ENCODE measurements at regions of chr19 and their contacts with region 1.

Region 1: DNA sequence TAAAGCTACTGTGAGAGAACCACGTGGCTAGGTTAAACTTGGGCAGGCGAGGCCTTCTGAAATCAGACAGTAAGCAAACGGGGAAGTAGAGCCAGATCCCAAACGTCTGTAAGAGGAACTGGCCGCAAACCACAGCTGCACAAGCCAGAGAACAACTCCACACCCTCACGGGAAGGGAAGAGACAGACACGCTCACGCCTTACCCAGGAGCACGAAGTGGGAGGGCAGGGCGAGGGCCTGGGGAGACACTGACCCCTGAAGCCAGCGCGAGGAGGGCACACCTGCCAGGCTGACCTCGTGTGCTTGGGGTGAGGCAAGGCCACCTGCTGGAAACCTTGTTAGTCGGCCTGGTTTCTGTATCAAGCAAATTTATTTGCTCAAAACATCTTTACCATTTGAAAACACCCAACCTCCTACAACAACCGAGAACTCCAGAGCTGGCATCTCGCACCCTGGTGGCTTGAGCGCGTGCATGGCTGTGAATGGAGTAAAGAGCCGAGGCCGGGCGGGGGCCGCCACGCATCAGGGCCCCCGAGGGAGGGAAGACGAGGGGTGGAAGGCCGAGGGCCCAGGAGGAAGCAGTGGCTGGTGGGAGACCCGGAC is 7.3 kb downstream of the POLR2E start:
- DNase-seq: peak in 2 of 5 donors; percentile 71
- H3K4me3 ChIP-seq: peak overlapping the region; percentile 14
- H3K4me3 Mint-ChIP-seq: peak overlapping the region; percentile 15 to 74 (median 48)
- H3K27ac ChIP-seq: peak overlapping the region; percentile 27
- H3K27ac Mint-ChIP-seq: peak overlapping the region; percentile 70 to 97 (median 90)
- H3K4me1 ChIP-seq: peaks cover 55% of the 10 kb centered on the region
- H3K4me1 Mint-ChIP-seq: peaks cover 31 to 67% (median 42%) of the 10 kb centered on the region in 3 donors
- H3K27me3 ChIP-seq: no peaks in the 10 kb centered on the region
- H3K27me3 Mint-ChIP-seq: peaks cover 0 to 5% of the 10 kb centered on the region in 2 donors

Region 2: DNA sequence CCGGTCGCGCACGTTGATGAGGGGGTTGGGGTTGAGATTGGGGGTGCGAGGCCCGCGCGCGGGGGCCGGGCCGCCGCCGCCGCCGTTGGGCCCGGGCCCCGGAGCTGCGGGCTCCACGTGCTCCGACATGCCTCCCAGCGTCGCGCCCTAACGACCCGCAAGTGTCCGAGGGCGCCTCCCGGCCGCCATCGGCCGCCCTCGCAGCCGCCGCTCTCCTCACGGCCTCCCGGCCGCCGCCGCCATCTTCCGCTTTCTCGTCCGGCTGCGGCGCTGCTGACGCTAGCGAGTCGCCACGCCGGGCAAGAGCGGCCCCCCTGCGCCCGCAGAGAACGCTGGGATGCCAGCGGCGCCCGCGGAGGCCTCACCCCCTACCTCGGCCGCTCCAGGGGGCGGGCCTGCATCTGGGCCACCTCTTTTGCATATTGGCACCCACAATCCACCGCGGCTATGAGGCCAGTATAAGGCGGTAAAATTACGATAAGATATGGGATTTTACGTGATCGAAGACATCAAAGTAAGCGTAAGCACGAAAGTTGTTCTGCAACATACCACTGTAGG is 67.0 kb before region 1 on chr19 and contains the start of gene TMEM259:
- CTCF ChIA-PET with region 1: interaction called, 3 read pairs
- POLR2A ChIA-PET with region 1: interaction called, 143 read pairs
- DNase-seq: peak; percentile 96 to 99 (median 98)
- H3K4me3 ChIP-seq: peak within 1 kb of the TSS; percentile 71
- H3K4me3 Mint-ChIP-seq: peak within 1 kb of the TSS; percentile 76 to 95 (median 89)
- H3K27ac ChIP-seq: peak within 1 kb of the TSS; percentile 97
- H3K27ac Mint-ChIP-seq: peak within 1 kb of the TSS; percentile 98 to 100 (median 99)
- H3K4me1 ChIP-seq: peaks cover 59% of the 10 kb centered on the region
- H3K4me1 Mint-ChIP-seq: peaks cover 24 to 60% (median 44%) of the 10 kb centered on the region in 3 donors
- H3K27me3 ChIP-seq: no peaks in the 10 kb centered on the region
- H3K27me3 Mint-ChIP-seq: peaks cover 0 to 6% of the 10 kb centered on the region in 2 donors
- total RNA-seq, gene TMEM259: 151 to 157 TPM

Region 3: DNA sequence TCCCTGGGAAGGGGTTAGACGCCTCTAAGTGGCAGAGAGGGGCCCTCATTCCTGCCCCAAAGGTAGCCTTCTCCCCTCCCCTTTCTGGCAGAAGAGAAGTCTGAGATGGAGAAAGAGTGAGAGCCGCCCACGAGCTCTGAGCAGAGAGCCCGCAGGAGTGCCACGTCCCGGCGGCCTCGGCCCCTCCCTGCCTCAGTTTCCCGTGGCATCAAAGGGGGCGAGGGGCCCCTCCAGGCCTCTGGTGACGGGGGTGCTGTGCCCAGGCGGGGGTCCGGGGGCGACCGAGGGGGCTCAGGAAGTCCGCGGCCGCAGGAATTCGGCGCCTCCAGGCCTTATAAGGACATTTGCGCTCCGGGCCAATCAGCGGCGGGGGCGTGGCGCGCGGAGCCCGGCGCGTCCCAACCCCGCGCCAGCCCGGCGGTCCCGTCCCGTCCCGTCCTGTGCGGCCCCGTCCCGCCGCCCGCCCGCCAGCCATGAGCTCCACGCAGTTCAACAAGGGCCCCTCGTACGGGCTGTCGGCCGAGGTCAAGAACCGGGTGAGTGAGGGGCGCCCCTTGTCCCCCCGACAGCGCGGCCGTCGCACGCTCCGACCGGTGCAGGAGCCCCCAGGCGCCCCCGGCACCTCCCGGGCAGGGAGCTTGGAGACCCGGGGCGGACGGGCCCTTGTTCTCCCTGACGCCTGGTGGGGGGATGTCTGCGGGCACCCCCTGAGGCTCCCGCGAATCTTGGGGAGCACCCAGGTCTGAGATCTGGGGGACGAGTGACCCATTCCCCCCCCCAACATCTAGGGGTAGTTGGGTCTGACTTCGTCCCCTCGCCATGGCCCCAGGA is 61.5 kb before region 1 on chr19 and contains the start of gene CNN2:
- CTCF ChIA-PET with region 1: interaction called, 12 read pairs
- POLR2A ChIA-PET with region 1: interaction called, 143 read pairs
- DNase-seq: peak; percentile 58 to 71 (median 68)
- H3K4me3 ChIP-seq: peak within 1 kb of the TSS; percentile 92
- H3K4me3 Mint-ChIP-seq: peak within 1 kb of the TSS; percentile 95 to 99 (median 98)
- H3K27ac ChIP-seq: peak within 1 kb of the TSS; percentile 89
- H3K27ac Mint-ChIP-seq: peak within 1 kb of the TSS; percentile 82 to 99 (median 96)
- H3K4me1 ChIP-seq: peaks cover 38% of the 10 kb centered on the region
- H3K4me1 Mint-ChIP-seq: peaks cover 26 to 45% (median 32%) of the 10 kb centered on the region in 3 donors
- H3K27me3 ChIP-seq: no peaks in the 10 kb centered on the region
- H3K27me3 Mint-ChIP-seq: peaks cover 0 to 6% of the 10 kb centered on the region in 2 donors
- total RNA-seq, gene CNN2: 78.1 to 78.9 TPM

Region 4: GRCh38 chr19:1039646-1040475 is 48.1 kb before region 1 on chr19 and contains the start of gene ABCA7:
- CTCF ChIA-PET with region 1: interaction called, 5 read pairs
- POLR2A ChIA-PET with region 1: interaction called, 13 read pairs
- DNase-seq: peak; percentile 98 to 100 (median 99)
- H3K4me3 ChIP-seq: peak within 1 kb of the TSS; percentile 78
- H3K4me3 Mint-ChIP-seq: peak within 1 kb of the TSS; percentile 94 to 100 (median 99)
- H3K27ac ChIP-seq: peak within 1 kb of the TSS; percentile 72
- H3K27ac Mint-ChIP-seq: peak within 1 kb of the TSS; percentile 86 to 97 (median 92)
- H3K4me1 ChIP-seq: peaks cover 49% of the 10 kb centered on the region
- H3K4me1 Mint-ChIP-seq: peaks cover 41 to 61% (median 46%) of the 10 kb centered on the region in 3 donors
- H3K27me3 ChIP-seq: no peaks in the 10 kb centered on the region
- H3K27me3 Mint-ChIP-seq: peaks cover 0 to 1% of the 10 kb centered on the region in 2 donors
- total RNA-seq, gene ABCA7: 33.8 to 39.5 TPM

Region 5: DNA sequence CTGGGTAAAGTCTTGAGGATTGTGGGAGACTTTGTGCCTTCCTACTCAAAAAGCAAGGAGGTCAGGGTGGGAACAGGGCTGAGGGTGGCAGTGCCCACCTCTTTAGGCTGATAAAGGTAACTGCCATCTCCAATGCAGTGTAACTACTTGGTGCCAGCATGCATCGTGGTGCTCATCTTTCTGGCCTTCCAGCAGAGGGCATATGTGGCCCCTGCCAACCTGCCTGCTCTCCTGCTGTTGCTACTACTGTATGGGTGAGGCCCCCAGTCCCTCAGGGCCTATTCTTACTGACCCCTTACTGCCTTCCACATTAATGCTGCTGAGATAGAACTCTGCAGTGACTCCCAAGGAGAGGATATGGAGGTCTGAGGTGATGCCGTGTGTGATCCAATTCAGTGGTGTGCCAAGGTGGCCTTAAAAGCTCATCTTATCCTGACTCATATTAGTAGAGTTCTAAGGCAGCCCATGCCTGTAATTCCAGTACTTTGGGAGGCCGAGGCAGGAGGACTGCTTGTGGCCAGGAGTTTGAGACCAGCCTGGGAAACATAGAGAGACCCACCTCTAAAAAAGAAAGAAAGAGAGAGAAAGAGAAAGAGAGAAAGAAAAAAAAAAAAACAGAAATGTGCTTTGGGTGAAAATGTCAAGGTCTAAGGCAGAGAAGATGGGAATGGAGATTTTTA is 30.6 kb before region 1 on chr19:
- CTCF ChIA-PET with region 1: interaction called, 57 read pairs
- POLR2A ChIA-PET with region 1: interaction called, 26 read pairs
- DNase-seq: peak in 3 of 5 donors; percentile 38 to 70 (median 56)
- H3K4me3 ChIP-seq: no peak overlapping the region
- H3K4me3 Mint-ChIP-seq: peak overlapping the region in 2 of 7 donors; percentile 29 to 42
- H3K27ac ChIP-seq: no peak overlapping the region
- H3K27ac Mint-ChIP-seq: peak overlapping the region; percentile 37 to 94 (median 82)
- H3K4me1 ChIP-seq: peaks cover 20% of the 10 kb centered on the region
- H3K4me1 Mint-ChIP-seq: peaks cover 24 to 29% (median 25%) of the 10 kb centered on the region in 3 donors
- H3K27me3 ChIP-seq: no peaks in the 10 kb centered on the region
- H3K27me3 Mint-ChIP-seq: no peaks in the 10 kb centered on the region

Region 6: DNA sequence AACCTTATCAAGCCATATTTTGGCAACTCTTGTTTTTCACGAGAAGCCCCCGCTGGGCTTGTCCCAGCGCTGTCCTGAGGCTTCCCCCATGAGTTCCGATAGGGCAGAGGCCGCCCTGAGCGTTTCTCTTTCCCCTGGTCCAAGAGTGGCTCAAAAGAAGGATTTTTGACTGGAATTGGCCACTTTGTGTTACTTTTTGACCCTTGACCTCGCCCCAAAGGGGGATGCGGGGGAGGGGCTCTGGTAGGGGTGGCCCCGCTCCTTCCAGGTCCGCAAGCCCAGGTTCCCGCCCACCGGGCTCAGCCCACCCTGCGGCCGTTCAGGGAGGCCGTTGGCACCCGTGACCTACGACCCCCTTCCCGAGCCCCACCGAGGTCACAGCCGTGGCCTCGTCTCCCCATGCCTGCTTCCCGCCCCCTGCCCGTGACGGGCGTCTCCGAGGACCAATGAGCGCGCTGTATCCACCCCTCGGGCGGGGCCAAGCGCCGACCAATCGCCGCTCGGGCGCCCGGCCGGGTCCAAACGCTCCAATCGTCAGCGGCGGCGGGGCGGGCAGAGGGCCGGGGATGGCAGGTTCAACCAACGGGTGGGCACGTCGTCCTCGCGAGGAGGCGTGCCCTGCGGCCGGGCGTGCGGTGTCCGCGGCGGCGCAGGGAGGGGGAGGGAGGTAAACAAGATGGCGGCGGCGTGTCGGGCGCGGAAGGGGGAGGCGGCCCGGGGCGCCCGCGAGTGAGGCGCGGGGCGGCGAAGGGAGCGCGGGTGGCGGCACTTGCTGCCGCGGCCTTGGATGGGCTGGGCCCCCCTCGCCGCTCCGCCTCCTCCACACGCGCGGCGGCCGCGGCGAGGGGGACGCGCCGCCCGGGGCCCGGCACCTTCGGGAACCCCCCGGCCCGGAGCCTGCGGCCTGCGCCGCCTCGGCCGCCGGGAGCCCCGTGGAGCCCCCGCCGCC is 117.5 kb after region 1 on chr19 and contains the start of gene STK11:
- CTCF ChIA-PET with region 1: no interaction called
- POLR2A ChIA-PET with region 1: interaction called, 12 read pairs
- DNase-seq: peak; percentile 99 to 100 (median 99)
- H3K4me3 ChIP-seq: peak within 1 kb of the TSS; percentile 90
- H3K4me3 Mint-ChIP-seq: peak within 1 kb of the TSS; percentile 92 to 98 (median 95)
- H3K27ac ChIP-seq: peak within 1 kb of the TSS; percentile 67
- H3K27ac Mint-ChIP-seq: peak within 1 kb of the TSS; percentile 79 to 98 (median 92)
- H3K4me1 ChIP-seq: peaks cover 40% of the 10 kb centered on the region
- H3K4me1 Mint-ChIP-seq: peaks cover 17 to 42% (median 25%) of the 10 kb centered on the region in 3 donors
- H3K27me3 ChIP-seq: no peaks in the 10 kb centered on the region
- H3K27me3 Mint-ChIP-seq: no peaks in the 10 kb centered on the region
- total RNA-seq, gene STK11: 66.9 to 69.7 TPM

Measured in CD8-positive, alpha-beta memory T cell (primary cell).